ENCODE measurements at regions of chr13 and their contacts with region 1.

Region 1: GRCh38 chr13:49300739-49301589 is 53.2 kb downstream of the CDADC1 start:
- DNase-seq: peak; percentile 53
- H3K4me3 ChIP-seq: no peak overlapping the region
- H3K27ac ChIP-seq: no peak overlapping the region
- H3K4me1 ChIP-seq: no peaks in the 10 kb centered on the region
- H3K27me3 ChIP-seq: no peaks in the 10 kb centered on the region
- CTCF ChIP-seq: peak; percentile 68 to 91 (median 90)
- POLR2A ChIP-seq: no peak

Region 2: GRCh38 chr13:48913827-48914226 is 387.1 kb before region 1 on chr13:
- intact Hi-C with region 1: no loop called
- DNase-seq: no peak
- H3K4me3 ChIP-seq: no peak overlapping the region
- H3K27ac ChIP-seq: no peak overlapping the region
- H3K4me1 ChIP-seq: no peaks in the 10 kb centered on the region
- H3K27me3 ChIP-seq: no peaks in the 10 kb centered on the region
- CTCF ChIP-seq: no peak
- POLR2A ChIP-seq: no peak

Region 3: GRCh38 chr13:49436890-49437289 is 135.9 kb after region 1 on chr13:
- intact Hi-C with region 1: loop called (anchors 1 kb)
- DNase-seq: peak; percentile 11
- H3K4me3 ChIP-seq: no peak overlapping the region
- H3K27ac ChIP-seq: no peak overlapping the region
- H3K4me1 ChIP-seq: no peaks in the 10 kb centered on the region
- H3K27me3 ChIP-seq: no peaks in the 10 kb centered on the region
- CTCF ChIP-seq: peak in 2 of 4 experiments; percentile 42 to 66
- POLR2A ChIP-seq: no peak

Region 4: DNA sequence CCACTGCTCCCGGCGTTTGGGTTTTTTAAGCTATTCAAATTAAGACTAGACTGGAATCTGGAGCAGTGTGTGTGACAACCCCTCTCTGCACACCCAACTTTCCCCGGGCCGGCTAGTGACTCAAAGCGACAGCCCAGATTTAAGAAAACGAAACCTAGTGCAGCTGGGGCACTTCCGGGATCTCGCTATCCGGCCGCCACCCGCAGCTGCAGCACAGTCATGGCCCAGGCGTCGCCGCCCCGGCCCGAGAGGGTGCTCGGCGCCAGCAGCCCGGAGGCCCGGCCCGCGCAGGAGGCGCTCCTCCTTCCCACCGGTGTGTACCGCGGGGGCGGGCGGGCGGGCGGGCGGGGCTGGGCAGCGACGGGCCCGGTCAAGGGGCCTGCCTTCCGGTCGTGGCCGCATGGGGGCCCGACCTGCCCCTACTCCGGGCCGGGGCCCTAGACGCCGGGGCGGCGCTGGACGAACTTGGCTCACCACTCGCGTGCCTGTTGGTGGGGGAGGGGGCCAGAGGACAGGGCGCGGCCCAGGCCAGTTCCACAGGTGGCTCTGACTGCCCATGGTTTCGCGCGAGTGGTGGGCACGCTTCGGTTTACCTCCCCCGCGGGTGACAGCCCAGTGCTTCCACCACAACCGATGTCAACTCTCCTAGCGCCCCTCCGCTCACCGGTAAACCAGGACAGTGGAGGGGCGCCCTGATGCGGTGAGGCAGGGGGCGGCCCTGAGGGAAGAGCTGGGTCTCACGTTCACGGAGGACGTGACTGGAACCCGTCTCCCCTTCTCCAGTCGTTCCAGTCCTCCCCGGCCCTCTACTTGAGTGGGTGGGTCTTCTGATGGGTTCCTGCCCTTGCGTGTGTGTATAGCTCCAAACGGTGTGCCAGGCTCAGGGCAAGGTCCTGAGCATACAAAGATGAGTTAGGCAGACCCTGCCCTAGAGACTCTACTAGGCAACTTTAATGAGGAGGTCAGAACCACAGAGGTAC is 195.1 kb after region 1 on chr13 and contains the start of gene PHF11:
- intact Hi-C with region 1: loop called (anchors 5 kb)
- DNase-seq: peak; percentile 77
- H3K4me3 ChIP-seq: peak within 1 kb of the TSS; percentile 58 to 65
- H3K27ac ChIP-seq: peak within 1 kb of the TSS; percentile 92 to 95
- H3K4me1 ChIP-seq: no peaks in the 10 kb centered on the region
- H3K27me3 ChIP-seq: no peaks in the 10 kb centered on the region
- CTCF ChIP-seq: no peak
- POLR2A ChIP-seq: peak; percentile 46
- total RNA-seq, gene PHF11: 28.5 to 29.5 TPM

Region 5: GRCh38 chr13:49606747-49607648 is 306.0 kb after region 1 on chr13:
- intact Hi-C with region 1: loop called (anchors 5 kb)
- DNase-seq: peak; percentile 88
- H3K4me3 ChIP-seq: peak overlapping the region; percentile 9 to 19
- H3K27ac ChIP-seq: no peak overlapping the region
- H3K4me1 ChIP-seq: no peaks in the 10 kb centered on the region
- H3K27me3 ChIP-seq: no peaks in the 10 kb centered on the region
- CTCF ChIP-seq: peak; percentile 27 to 85 (median 78)
- POLR2A ChIP-seq: no peak